PC-9 (cell line): ENCODE measurements at regions of chr9 and their contacts with region 1.

Region 1: GRCh38 chr9:96317335-96317980 is 15.5 kb upstream of the HSD17B3 start:
- DNase-seq: peak; percentile 34 to 43
- H3K4me3 ChIP-seq: no peak overlapping the region
- H3K27ac ChIP-seq: no peak overlapping the region
- H3K4me1 ChIP-seq: no peaks in the 10 kb centered on the region
- H3K27me3 ChIP-seq: no peaks in the 10 kb centered on the region
- CTCF ChIP-seq: peak; percentile 86

Region 2: GRCh38 chr9:94445846-94446245 is 1871.6 kb before region 1 on chr9:
- CTCF ChIA-PET with region 1: no interaction called
- POLR2A ChIA-PET with region 1: interaction called, 12 read pairs
- intact Hi-C with region 1: no loop called
- DNase-seq: no peak
- H3K4me3 ChIP-seq: no peak overlapping the region
- H3K27ac ChIP-seq: no peak overlapping the region
- H3K4me1 ChIP-seq: no peaks in the 10 kb centered on the region
- H3K27me3 ChIP-seq: no peaks in the 10 kb centered on the region
- CTCF ChIP-seq: no peak

Region 3: GRCh38 chr9:95923794-95924193 is 393.7 kb before region 1 on chr9:
- CTCF ChIA-PET with region 1: interaction called, 12 read pairs
- POLR2A ChIA-PET with region 1: no interaction called
- intact Hi-C with region 1: no loop called
- DNase-seq: no peak
- H3K4me3 ChIP-seq: no peak overlapping the region
- H3K27ac ChIP-seq: no peak overlapping the region
- H3K4me1 ChIP-seq: no peaks in the 10 kb centered on the region
- H3K27me3 ChIP-seq: no peaks in the 10 kb centered on the region
- CTCF ChIP-seq: no peak

Region 4: DNA sequence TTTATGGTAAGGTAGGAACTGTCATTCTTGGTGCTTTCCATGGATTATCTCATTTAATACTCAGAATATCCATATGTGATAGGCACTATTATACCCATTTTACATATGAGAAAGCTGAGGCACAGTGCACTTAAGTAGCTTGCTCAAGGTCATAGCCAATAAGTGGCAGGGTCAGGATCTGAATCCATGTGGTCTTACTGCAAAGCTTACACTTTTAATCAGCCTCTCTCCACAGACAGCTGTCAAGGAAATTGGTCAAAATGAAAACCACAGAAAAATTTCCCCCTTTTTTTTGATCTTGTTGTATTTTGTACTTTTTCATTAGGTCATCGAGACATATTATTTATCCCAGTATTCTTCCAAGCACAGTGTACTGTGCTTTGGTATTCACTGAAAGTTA is 363.5 kb before region 1 on chr9:
- CTCF ChIA-PET with region 1: interaction called, 10 read pairs
- POLR2A ChIA-PET with region 1: no interaction called
- intact Hi-C with region 1: no loop called
- DNase-seq: no peak
- H3K4me3 ChIP-seq: no peak overlapping the region
- H3K27ac ChIP-seq: no peak overlapping the region
- H3K4me1 ChIP-seq: no peaks in the 10 kb centered on the region
- H3K27me3 ChIP-seq: no peaks in the 10 kb centered on the region
- CTCF ChIP-seq: no peak

Region 5: GRCh38 chr9:96232539-96233241 is 84.8 kb before region 1 on chr9:
- CTCF ChIA-PET with region 1: interaction called, 20 read pairs
- POLR2A ChIA-PET with region 1: no interaction called
- intact Hi-C with region 1: loop called (anchors 1 kb)
- DNase-seq: peak; percentile 51 to 54
- H3K4me3 ChIP-seq: no peak overlapping the region
- H3K27ac ChIP-seq: no peak overlapping the region
- H3K4me1 ChIP-seq: no peaks in the 10 kb centered on the region
- H3K27me3 ChIP-seq: 0 out of 2 replicates have a peak, but pooled peaks cover 4% of the 10 kb centered on the region
- CTCF ChIP-seq: peak; percentile 89

Region 6: DNA sequence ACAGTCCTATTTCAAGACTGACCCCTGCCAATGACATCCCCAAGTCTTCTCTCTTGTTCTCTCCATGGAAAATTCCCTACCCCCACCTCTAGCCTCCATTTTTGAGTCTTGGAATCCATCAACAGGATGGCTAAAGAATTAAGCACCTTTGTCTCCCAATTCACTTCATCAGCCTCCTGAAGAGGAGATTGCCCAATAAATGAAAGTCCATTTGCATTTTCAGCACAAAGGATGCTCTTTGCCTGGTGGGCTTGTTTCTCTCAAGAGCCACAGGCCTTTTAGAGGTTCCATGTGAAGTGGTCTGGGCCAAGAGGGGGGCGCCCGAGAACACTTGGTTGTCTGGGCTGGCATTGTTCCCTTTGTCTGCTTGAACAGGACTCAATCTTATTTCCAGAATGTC is 28.1 kb before region 1 on chr9:
- CTCF ChIA-PET with region 1: no interaction called
- POLR2A ChIA-PET with region 1: no interaction called
- intact Hi-C with region 1: no loop called
- DNase-seq: no peak
- H3K4me3 ChIP-seq: no peak overlapping the region
- H3K27ac ChIP-seq: no peak overlapping the region
- H3K4me1 ChIP-seq: no peaks in the 10 kb centered on the region
- H3K27me3 ChIP-seq: no peaks in the 10 kb centered on the region
- CTCF ChIP-seq: no peak

Region 7: GRCh38 chr9:96299823-96300222 is 17.6 kb before region 1 on chr9:
- CTCF ChIA-PET with region 1: no interaction called
- POLR2A ChIA-PET with region 1: interaction called, 17 read pairs
- intact Hi-C with region 1: no loop called
- DNase-seq: peak; percentile 12 to 81
- H3K4me3 ChIP-seq: no peak overlapping the region
- H3K27ac ChIP-seq: no peak overlapping the region
- H3K4me1 ChIP-seq: peaks cover 13% of the 10 kb centered on the region; the same call in 1 of the 2 replicates
- H3K27me3 ChIP-seq: no peaks in the 10 kb centered on the region
- CTCF ChIP-seq: no peak

Region 8: GRCh38 chr9:96661711-96662110 is 344.3 kb after region 1 on chr9:
- CTCF ChIA-PET with region 1: interaction called, 14 read pairs
- POLR2A ChIA-PET with region 1: no interaction called
- intact Hi-C with region 1: no loop called
- DNase-seq: no peak
- H3K4me3 ChIP-seq: no peak overlapping the region
- H3K27ac ChIP-seq: no peak overlapping the region
- H3K4me1 ChIP-seq: 0 out of 2 replicates have a peak, but pooled peaks cover 4% of the 10 kb centered on the region
- H3K27me3 ChIP-seq: no peaks in the 10 kb centered on the region
- CTCF ChIP-seq: no peak